Activated CD4-positive, alpha-beta memory T cell treated with anti-CD3 and anti-CD28 coated beads, Interleukin-2, amount 10 ng/mL, durations not matched to agents 7 days and 5 days (primary cell): ENCODE measurements at regions of chr9 and their contacts with region 1.

Region 1: GRCh38 chr9:79571309-79572031 is at the start of gene TLE4:
- DNase-seq: peak; percentile 99
- H3K4me3 Mint-ChIP-seq: peak within 1 kb of the TSS; percentile 82
- H3K27ac Mint-ChIP-seq: peak within 1 kb of the TSS; percentile 72
- H3K4me1 Mint-ChIP-seq: peaks cover 31% of the 10 kb centered on the region
- H3K27me3 Mint-ChIP-seq: no peaks in the 10 kb centered on the region
- total RNA-seq, gene TLE4: 33.3 to 38.3 TPM

Region 2: DNA sequence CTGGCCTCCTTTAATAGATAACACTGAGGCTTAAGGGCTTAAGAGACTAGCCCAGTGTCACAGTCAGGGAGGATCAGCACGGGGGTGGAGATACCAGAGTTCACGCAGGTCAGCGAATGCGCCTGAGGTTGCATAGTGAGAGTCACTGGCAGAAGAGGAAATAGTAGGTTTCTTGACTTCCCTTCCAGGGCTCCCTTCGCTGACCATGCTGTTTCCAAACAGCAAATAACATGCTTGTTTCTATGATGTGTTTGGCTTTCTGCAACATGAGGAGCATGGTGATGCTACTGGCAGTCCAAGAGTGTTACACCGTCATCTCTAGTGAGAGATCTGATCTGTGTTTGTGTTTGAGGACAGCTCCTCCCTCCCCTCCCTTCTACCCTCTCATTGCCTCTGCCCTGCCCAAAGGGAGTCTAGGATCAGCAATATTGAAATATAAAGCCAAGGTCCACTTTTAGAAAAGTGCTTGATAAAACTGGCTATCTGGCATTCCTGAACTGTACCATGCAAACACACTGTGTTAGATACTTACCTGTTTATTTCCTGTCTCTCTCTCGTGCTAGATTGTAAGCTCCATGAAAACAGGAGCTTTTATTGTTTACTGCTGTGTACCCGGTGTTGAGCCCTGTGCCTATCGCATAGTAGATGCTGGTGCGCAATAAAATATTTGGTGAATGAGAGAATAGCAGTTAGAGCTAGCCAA is 12.6 kb after region 1 on chr9:
- CTCF ChIA-PET with region 1: interaction called, 3 read pairs
- POLR2A ChIA-PET with region 1: interaction called, 30 read pairs
- DNase-seq: peak; percentile 52
- H3K4me3 Mint-ChIP-seq: no peak overlapping the region
- H3K27ac Mint-ChIP-seq: no peak overlapping the region
- H3K4me1 Mint-ChIP-seq: peaks cover 42% of the 10 kb centered on the region
- H3K27me3 Mint-ChIP-seq: no peaks in the 10 kb centered on the region

Region 3: DNA sequence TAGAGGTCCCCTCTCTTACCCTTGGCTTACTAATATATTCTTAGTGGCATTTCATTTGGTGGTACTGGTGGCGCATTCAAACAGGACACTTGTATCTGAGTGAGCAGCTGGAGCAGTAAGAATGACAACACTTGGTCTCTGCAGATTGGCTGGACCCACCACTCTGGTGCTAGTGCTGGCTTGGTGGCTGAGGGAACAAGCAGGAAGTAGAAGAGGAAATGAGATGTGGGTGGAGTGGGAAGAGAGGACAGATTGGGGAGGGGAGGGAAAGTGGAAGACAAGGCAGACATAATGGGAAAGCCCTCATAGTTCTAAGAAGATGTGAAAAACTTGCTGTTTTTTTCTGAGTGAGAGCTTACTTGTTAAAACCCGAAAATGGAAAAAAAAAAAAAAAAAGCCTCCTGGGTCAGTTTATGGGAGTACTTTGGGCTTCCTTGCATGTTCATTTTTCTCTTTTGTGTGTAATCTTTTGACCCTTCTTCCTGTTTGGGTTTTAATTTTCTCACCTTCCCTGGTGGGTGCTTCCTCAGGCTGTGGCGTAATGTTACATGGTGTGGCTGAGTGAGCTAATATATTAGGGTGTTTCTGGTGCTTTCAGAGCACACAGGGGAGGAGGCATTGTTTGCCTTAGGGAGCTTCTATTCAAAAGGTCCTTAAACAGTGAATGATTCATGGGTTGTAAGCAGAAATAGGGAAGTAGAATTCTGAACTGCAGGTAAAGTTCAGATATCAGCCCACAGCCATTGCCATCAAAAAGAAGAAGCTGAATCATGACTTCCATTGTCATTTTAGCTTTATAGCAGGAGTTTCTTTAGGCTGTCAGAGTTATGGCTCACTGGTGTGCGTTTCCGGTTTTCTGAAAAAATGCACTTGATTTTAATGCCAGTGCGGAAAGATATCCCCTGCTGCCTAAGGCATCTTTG is 52.6 kb after region 1 on chr9:
- CTCF ChIA-PET with region 1: interaction called, 5 read pairs
- POLR2A ChIA-PET with region 1: interaction called, 17 read pairs
- DNase-seq: peak; percentile 47
- H3K4me3 Mint-ChIP-seq: peak overlapping the region; percentile 38
- H3K27ac Mint-ChIP-seq: peak overlapping the region; percentile 72
- H3K4me1 Mint-ChIP-seq: peaks cover 21% of the 10 kb centered on the region
- H3K27me3 Mint-ChIP-seq: no peaks in the 10 kb centered on the region

Region 4: GRCh38 chr9:79633558-79633957 is 62.1 kb after region 1 on chr9:
- CTCF ChIA-PET with region 1: no interaction called
- POLR2A ChIA-PET with region 1: interaction called, 15 read pairs
- DNase-seq: no peak
- H3K4me3 Mint-ChIP-seq: no peak overlapping the region
- H3K27ac Mint-ChIP-seq: peak overlapping the region; percentile 64
- H3K4me1 Mint-ChIP-seq: peaks cover 76% of the 10 kb centered on the region
- H3K27me3 Mint-ChIP-seq: no peaks in the 10 kb centered on the region